Activated naive CD4-positive, alpha-beta T cell treated with anti-CD3 and anti-CD28 coated beads for 36 hours (primary cell): ENCODE measurements at regions of chr1 and their contacts with region 1.

Region 1: DNA sequence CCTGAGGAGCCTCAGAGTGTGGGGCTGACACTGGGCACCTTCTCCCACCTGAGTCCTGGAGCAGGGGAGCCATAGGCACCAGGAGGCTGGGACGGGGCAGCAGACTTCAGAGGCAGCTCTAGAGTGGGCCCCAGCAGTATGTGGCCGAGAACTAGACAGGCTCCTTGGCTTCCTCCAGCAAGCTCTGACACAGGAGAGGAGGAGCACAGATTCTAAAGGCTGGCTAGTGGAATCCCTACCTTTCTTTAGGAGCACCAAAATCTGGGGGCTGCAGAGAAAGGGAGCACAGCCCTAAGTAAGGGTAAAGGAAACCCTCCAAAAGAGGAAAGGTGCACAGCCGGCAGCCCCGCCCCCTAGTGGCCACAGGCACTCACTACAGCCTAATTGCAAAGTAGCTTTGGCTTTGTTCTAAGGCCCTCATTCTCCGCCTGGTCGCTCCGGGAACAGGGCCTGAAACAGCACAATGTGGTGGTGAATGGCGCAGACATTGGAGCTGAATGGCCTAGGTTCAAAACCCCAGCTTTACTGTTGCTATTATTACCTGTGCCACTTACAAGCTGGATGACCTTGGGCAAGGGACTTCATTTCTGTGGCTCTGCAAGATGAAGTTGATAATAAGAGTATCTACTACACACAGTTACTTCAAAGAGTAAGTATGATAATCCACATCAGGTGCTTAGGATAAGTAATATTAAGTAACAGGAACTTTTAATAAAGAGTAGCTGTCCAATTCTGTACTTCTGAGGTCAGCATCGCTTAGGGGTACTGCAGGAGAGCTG is 8.8 kb upstream of the GUCA2A start:
- DNase-seq: peak; percentile 76
- H3K4me3 Mint-ChIP-seq: no peak overlapping the region
- H3K27ac Mint-ChIP-seq: no peak overlapping the region
- H3K4me1 Mint-ChIP-seq: no peaks in the 10 kb centered on the region
- H3K27me3 Mint-ChIP-seq: no peaks in the 10 kb centered on the region

Region 2: DNA sequence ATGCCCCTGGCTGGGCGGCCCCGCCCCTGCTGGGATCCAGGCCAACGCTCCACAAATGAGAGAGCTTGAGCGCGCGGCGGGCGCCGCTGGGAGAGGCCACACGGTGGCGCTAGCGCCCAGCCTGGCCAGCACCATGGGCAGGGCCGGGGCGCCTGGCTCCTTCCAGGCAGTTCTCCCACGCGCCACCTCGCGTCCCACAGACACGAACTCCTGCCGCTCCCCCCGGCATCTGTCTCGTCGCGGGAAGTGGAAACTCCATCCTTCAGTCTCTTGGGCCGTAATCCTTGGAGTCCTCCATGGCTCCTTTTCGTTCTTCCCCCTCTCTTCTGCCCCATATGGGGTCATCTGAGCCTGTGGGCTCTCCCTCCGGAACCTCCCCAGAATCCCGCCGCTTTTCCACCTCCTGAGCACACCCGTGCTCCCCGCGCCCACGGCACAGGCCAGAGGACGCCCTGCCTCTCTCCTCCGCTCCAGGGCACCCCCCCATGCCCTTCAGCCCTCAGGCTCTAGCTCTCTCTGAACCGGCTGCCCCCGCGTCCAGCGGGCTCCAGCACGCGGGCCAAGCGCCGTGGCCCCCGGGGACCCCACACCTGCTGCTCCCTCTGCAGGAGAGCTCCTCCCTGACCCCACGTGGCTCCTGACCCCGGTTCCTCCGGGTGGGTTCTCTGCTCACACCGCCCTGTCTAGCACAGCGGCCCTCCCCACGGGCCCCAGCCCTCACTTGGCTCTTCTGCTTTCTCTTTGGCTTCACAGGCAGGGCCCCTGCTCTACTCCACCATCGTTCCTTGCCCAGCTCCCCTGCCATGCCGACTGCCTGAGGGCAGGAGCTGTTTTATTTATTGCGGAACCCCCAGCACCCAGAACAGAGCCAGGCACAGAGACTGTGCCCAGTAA is 656.9 kb before region 1 on chr1:
- CTCF ChIA-PET with region 1: no interaction called
- intact Hi-C with region 1: loop called (anchors 2 kb)
- DNase-seq: peak; percentile 76
- H3K4me3 Mint-ChIP-seq: no peak overlapping the region
- H3K27ac Mint-ChIP-seq: no peak overlapping the region
- H3K4me1 Mint-ChIP-seq: peaks cover 9% of the 10 kb centered on the region
- H3K27me3 Mint-ChIP-seq: no peaks in the 10 kb centered on the region

Region 3: GRCh38 chr1:41573785-41574713 is 599.3 kb before region 1 on chr1:
- CTCF ChIA-PET with region 1: interaction called, 12 read pairs
- intact Hi-C with region 1: loop called (anchors 1 kb)
- DNase-seq: peak; percentile 92
- H3K4me3 Mint-ChIP-seq: no peak overlapping the region
- H3K27ac Mint-ChIP-seq: peak overlapping the region; percentile 20
- H3K4me1 Mint-ChIP-seq: peaks cover 42% of the 10 kb centered on the region
- H3K27me3 Mint-ChIP-seq: no peaks in the 10 kb centered on the region

Region 4: GRCh38 chr1:41939194-41939593 is 234.2 kb before region 1 on chr1:
- CTCF ChIA-PET with region 1: no interaction called
- intact Hi-C with region 1: no loop called
- DNase-seq: no peak
- H3K4me3 Mint-ChIP-seq: no peak overlapping the region
- H3K27ac Mint-ChIP-seq: no peak overlapping the region
- H3K4me1 Mint-ChIP-seq: peaks cover 18% of the 10 kb centered on the region
- H3K27me3 Mint-ChIP-seq: no peaks in the 10 kb centered on the region

Region 5: DNA sequence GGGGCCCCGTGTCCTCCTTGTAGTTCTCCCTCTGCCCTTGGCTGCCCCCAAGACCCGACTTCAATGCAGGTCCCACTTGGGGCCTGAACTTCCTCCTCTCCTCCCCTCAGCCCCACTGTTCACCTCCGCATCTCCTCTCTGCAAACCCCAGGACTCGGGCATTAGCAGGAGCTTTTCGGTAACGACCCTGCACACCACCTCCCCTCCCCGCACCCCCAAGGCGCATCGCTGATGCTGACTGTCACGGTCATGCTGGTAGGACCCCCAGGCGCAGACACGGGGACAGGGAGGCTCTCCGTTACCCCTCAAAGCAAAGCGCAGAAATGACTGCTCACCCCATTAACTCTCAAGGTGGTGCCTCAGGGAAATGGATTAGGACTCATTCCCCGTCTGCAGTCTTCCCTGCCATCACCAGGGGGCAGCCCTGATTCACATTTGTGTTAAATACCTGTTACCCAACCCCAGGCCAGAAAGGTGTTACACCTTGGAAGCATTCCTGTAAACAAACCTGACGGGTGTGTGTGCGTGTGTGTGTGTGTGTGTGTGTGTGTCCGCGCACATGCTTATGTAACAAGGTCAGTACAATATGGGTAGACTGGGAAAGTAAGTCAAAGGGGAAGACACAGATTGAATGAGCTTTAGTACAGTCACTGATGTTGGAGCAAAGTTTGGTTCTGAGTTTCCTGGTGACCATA is 26.6 kb before region 1 on chr1:
- CTCF ChIA-PET with region 1: interaction called, 16 read pairs
- intact Hi-C with region 1: loop called (anchors 2 kb)
- DNase-seq: peak; percentile 87
- H3K4me3 Mint-ChIP-seq: no peak overlapping the region
- H3K27ac Mint-ChIP-seq: no peak overlapping the region
- H3K4me1 Mint-ChIP-seq: peaks cover 7% of the 10 kb centered on the region
- H3K27me3 Mint-ChIP-seq: peaks cover 13% of the 10 kb centered on the region

Region 6: GRCh38 chr1:42157667-42158066 is 15.7 kb before region 1 on chr1:
- CTCF ChIA-PET with region 1: interaction called, 23 read pairs
- intact Hi-C with region 1: no loop called
- DNase-seq: peak; percentile 38
- H3K4me3 Mint-ChIP-seq: no peak overlapping the region
- H3K27ac Mint-ChIP-seq: no peak overlapping the region
- H3K4me1 Mint-ChIP-seq: peaks cover 7% of the 10 kb centered on the region
- H3K27me3 Mint-ChIP-seq: no peaks in the 10 kb centered on the region

Region 7: DNA sequence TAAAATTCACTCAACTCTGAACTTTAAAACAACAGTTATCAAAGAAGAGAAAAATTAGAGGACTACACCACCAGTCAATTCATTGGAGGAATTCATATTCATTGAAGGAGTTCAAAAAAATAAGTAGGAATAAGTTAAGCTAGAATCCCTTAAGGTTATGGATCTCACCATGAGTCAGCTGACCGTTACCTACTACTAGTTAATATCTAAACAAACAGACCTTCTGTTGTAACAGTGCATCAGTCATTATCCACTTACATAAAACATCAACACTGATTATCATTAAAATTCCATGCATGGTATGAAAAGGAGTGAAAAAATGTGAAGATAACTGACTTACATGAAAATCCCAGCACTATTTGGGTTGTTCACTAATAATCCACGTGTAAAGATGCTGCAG is 116.8 kb after region 1 on chr1:
- CTCF ChIA-PET with region 1: no interaction called
- intact Hi-C with region 1: no loop called
- DNase-seq: no peak
- H3K4me3 Mint-ChIP-seq: no peak overlapping the region
- H3K27ac Mint-ChIP-seq: no peak overlapping the region
- H3K4me1 Mint-ChIP-seq: peaks cover 15% of the 10 kb centered on the region
- H3K27me3 Mint-ChIP-seq: no peaks in the 10 kb centered on the region

Region 8: DNA sequence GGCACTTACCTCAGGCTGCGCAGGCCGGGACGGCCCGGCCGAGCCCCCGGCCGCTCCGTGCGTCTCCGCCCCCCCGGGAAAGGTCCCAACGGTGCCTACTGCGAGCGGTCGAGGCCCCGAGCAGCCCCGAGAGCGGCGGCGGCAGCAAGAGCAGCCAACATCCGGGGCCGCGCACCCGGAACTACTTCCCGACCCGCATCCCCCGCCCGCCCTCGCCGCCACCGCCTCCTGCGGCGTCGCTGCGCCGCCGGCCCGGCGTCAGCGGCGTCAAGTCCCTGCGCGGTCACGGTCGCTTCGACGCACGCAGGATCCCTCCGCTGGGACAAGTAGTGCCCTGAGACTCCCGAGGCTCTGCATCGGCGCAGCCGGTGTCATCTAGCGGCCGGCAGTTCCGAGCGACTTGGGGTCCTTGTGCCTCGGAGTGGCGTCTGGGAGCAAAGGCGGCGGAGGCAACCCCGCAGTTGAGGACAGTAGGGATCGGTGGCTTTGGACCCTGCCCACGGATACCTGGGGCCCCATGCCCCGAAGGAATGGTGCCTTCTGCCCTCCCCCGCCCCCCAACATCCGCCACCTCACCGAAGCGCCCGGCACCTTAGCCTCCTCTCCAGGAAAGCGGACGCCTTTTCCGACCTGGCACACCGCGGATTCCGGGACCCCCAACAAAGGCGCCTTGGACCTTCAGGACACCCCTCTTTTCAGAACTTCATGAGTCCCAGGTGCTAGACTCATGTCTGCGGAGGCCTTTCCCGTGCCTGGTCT is 161.9 kb after region 1 on chr1 and contains the start of gene FOXJ3:
- CTCF ChIA-PET with region 1: interaction called, 4 read pairs
- intact Hi-C with region 1: loop called (anchors 1 kb)
- DNase-seq: peak; percentile 93
- H3K4me3 Mint-ChIP-seq: peak within 1 kb of the TSS; percentile 92
- H3K27ac Mint-ChIP-seq: peak within 1 kb of the TSS; percentile 88
- H3K4me1 Mint-ChIP-seq: peaks cover 39% of the 10 kb centered on the region
- H3K27me3 Mint-ChIP-seq: no peaks in the 10 kb centered on the region
- total RNA-seq, gene FOXJ3: 35.6 to 37.2 TPM

Region 9: DNA sequence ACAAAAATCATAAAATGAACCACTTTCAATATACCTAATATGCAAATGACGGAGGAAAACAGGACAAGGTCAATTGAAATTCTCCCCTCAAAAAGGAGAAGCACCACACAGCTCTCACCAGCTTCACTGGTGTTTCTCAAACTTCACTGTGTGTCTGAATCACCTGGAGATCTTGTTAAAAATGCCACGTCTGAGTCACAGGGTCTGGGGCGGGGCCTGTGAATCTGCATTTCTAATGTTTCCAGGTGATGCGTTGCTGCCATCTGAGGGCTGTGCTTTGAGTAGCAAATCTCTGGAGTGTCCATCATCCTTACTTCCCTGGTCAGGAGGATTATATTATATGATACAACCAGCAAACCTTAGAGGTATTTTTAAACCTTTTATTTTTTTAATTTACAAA is 557.6 kb after region 1 on chr1:
- CTCF ChIA-PET with region 1: interaction called, 3 read pairs
- intact Hi-C with region 1: loop called (anchors 1 kb)
- DNase-seq: peak; percentile 87
- H3K4me3 Mint-ChIP-seq: no peak overlapping the region
- H3K27ac Mint-ChIP-seq: no peak overlapping the region
- H3K4me1 Mint-ChIP-seq: peaks cover 3% of the 10 kb centered on the region
- H3K27me3 Mint-ChIP-seq: no peaks in the 10 kb centered on the region